ENCODE measurements at regions of chr17 and their contacts with region 1.

Region 1: DNA sequence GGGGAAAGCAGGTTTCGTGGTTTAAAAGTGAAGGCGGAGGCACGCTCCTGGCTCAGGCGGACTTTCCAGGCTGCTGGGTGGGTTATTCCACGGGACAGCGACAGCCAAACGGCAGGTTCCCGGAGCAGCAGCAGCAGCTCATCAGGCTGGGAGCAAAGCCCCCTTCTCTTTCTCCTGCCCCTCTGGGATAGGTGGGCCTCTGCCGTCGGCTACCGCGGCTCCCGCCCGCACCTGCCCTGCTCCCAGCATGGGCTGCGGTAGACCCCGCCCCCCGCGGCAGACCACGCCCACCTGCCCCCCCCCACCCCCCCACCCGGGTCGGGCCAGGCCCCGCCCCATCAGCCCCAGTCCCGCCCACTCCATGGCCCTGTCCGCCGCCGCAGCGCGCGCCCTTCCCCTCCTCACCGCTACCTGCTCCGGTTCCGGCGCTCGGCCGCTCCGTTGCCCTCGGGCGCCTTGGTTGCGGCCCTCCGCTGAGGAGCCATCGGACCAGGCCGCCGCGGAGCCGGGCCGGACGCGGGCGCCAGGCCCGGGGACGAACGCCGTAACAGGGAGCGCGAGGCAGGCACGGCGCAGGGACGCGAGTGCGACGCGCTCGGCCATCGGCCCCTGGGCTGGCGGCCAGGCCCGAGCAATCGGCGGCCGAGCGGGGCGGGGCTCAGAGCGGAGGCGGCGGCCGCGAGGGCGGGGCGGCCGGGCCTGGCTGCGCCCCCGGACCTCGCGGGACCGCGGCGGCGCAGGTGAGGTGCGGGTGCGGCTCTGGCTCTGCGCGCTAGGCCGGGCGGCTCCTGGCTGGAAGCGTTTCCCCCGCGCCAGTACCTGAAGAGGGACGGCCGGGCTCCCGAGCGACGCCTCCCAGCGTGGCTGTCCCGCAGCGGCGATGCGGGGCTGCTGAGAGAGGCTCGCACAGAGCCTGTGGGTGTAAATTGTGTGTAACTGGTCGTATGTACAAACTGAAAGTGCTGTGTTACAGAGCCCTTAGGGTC is at the starts of genes HEXD and OGFOD3:
- DNase-seq: peak; percentile 69 to 95 (median 83)
- ATAC-seq: peak; percentile 85
- H3K4me3 ChIP-seq: peak within 1 kb of the TSS; percentile 76
- H3K4me3 Mint-ChIP-seq: peak within 1 kb of the TSS; percentile 85
- H3K27ac ChIP-seq: peak within 1 kb of the TSS; percentile 35 to 50
- H3K27ac Mint-ChIP-seq: peak within 1 kb of the TSS; percentile 78
- H3K4me1 ChIP-seq: peaks cover 30% of the 10 kb centered on the region
- H3K4me1 Mint-ChIP-seq: peaks cover 32% of the 10 kb centered on the region
- H3K27me3 ChIP-seq: no peaks in the 10 kb centered on the region
- H3K27me3 Mint-ChIP-seq: no peaks in the 10 kb centered on the region
- CTCF ChIP-seq: no peak
- total RNA-seq, gene HEXD: 27.8 to 31.2 TPM
- total RNA-seq, gene OGFOD3: 12.9 to 13.7 TPM

Region 2: DNA sequence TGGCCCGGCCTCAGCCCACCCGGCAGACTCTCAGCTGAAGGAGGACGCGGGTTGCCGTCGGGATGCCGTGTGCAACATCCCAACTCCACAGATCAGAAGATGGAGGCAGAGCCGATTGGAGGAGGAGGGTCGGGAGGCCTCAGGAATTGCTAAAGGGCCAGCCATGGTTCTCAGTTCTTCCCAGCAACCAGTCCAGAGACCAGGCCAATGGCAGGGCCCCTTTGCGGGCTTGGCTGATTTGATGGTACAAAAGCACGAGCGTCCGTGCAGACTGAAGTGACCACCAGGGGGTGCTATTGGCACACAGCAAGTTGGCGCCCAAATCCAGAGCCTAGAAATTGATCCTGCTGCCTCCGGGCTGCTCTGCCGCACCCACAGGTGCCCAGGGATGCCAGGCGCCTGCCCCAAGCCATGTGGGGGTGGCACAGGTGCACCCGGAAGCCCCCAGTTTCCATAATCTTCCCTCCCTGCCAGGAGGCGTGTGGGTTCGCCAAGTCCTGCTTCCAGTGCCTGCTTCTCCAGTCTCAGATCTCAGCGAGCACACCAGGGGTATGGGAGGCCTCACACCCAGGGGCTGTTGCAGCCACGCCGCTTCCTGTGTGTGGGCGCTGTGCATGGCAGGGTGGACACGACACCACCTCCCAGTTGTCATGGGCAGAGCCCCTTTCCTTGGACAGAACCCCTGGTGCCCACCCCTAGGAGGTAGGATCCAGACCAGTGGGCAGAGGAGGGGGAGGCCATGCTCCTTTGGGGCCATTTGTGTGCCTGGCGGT is 66.4 kb before region 1 on chr17:
- CTCF ChIA-PET with region 1: no interaction called
- POLR2A ChIA-PET with region 1: no interaction called
- intact Hi-C with region 1: loop called (anchors 1 kb)
- DNase-seq: peak; percentile 68 to 93 (median 78)
- ATAC-seq: peak; percentile 92
- H3K4me3 ChIP-seq: no peak overlapping the region
- H3K4me3 Mint-ChIP-seq: no peak overlapping the region
- H3K27ac ChIP-seq: no peak overlapping the region
- H3K27ac Mint-ChIP-seq: no peak overlapping the region
- H3K4me1 ChIP-seq: peaks cover 13% of the 10 kb centered on the region
- H3K4me1 Mint-ChIP-seq: no peaks in the 10 kb centered on the region
- H3K27me3 ChIP-seq: peaks cover 0 to 4% of the 10 kb centered on the region in 2 experiments
- H3K27me3 Mint-ChIP-seq: peaks cover 5% of the 10 kb centered on the region
- CTCF ChIP-seq: peak; percentile 84

Region 3: GRCh38 chr17:82457997-82458864 is 39.9 kb after region 1 on chr17 and contains the start of gene NARF:
- CTCF ChIA-PET with region 1: no interaction called
- POLR2A ChIA-PET with region 1: interaction called, 11 read pairs
- intact Hi-C with region 1: loop called (anchors 1 to 5 kb)
- DNase-seq: peak; percentile 89 to 98 (median 96)
- ATAC-seq: peak; percentile 96
- H3K4me3 ChIP-seq: peak within 1 kb of the TSS; percentile 89
- H3K4me3 Mint-ChIP-seq: peak within 1 kb of the TSS; percentile 91
- H3K27ac ChIP-seq: peak within 1 kb of the TSS; percentile 95 to 99
- H3K27ac Mint-ChIP-seq: peak within 1 kb of the TSS; percentile 99
- H3K4me1 ChIP-seq: peaks cover 39% of the 10 kb centered on the region
- H3K4me1 Mint-ChIP-seq: peaks cover 39% of the 10 kb centered on the region
- H3K27me3 ChIP-seq: no peaks in the 10 kb centered on the region
- H3K27me3 Mint-ChIP-seq: no peaks in the 10 kb centered on the region
- CTCF ChIP-seq: no peak
- total RNA-seq, gene NARF: 57.1 to 62.0 TPM

Region 4: GRCh38 chr17:82518826-82519810 is 100.8 kb after region 1 on chr17 and contains the start of gene FOXK2:
- CTCF ChIA-PET with region 1: no interaction called
- POLR2A ChIA-PET with region 1: interaction called, 4 read pairs
- intact Hi-C with region 1: loop called in 1 of 2 experiments (anchors 1 kb)
- DNase-seq: peak; percentile 84 to 97 (median 92)
- ATAC-seq: peak; percentile 98
- H3K4me3 ChIP-seq: peak within 1 kb of the TSS; percentile 66
- H3K4me3 Mint-ChIP-seq: peak within 1 kb of the TSS; percentile 88
- H3K27ac ChIP-seq: peak within 1 kb of the TSS; percentile 50 to 71
- H3K27ac Mint-ChIP-seq: peak within 1 kb of the TSS; percentile 84
- H3K4me1 ChIP-seq: peaks cover 38% of the 10 kb centered on the region
- H3K4me1 Mint-ChIP-seq: peaks cover 25% of the 10 kb centered on the region
- H3K27me3 ChIP-seq: no peaks in the 10 kb centered on the region
- H3K27me3 Mint-ChIP-seq: no peaks in the 10 kb centered on the region
- CTCF ChIP-seq: no peak
- total RNA-seq, gene FOXK2: 32.5 to 33.7 TPM

Region 5: GRCh38 chr17:82751571-82752370 is 333.5 kb after region 1 on chr17 and contains the start of gene TBCD:
- CTCF ChIA-PET with region 1: no interaction called
- POLR2A ChIA-PET with region 1: no interaction called
- intact Hi-C with region 1: loop called in 1 of 2 experiments (anchors 10 kb)
- DNase-seq: peak; percentile 77 to 96 (median 89)
- ATAC-seq: peak; percentile 71
- H3K4me3 ChIP-seq: peak within 1 kb of the TSS; percentile 63
- H3K4me3 Mint-ChIP-seq: peak within 1 kb of the TSS; percentile 89
- H3K27ac ChIP-seq: peak within 1 kb of the TSS in 1 of 2 donors; percentile 41
- H3K27ac Mint-ChIP-seq: no peak within 1 kb of the TSS
- H3K4me1 ChIP-seq: peaks cover 32% of the 10 kb centered on the region
- H3K4me1 Mint-ChIP-seq: peaks cover 25% of the 10 kb centered on the region
- H3K27me3 ChIP-seq: no peaks in the 10 kb centered on the region
- H3K27me3 Mint-ChIP-seq: no peaks in the 10 kb centered on the region
- CTCF ChIP-seq: no peak
- total RNA-seq, gene TBCD: 74.6 to 80.3 TPM